ENCODE measurements at regions of chr5 and their contacts with region 1.

Region 1: DNA sequence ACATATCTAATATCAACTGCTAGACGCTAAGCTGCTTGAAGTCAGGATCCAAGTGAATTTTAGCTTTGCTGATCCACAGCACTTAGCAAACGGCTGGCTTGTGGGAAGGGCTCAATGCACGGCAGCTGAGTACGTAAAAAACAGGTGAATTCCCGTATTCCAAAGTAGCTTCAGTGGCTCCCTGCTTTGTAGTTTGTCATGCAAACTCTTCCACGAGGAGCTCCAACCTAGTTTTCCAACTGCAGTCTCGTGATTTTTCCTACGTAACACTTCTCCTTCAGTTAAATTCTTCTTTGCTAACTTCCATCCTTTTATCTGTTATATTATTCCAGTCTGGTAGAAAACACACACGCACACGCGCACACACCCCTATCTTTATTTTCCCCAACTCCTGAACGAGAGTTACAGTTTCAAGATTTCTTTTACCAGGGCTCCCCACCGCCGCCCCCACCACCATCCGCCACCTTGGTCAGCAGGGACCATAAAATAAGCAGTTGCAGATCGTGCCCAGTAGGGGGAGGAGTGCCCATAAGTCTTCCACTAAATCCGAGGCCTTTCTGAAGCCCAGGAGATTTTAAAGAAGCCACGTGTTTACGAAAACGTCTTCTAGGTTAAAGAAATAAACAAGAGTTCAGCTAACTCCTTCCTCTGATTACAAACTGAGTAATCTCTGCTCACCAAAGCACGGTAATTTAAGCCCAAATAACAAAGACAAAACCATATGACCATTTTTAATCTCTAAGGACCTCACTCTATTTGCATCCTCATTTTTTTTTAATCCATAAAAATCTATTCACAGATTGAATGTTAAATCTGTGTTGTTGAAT is 34.8 kb upstream of the TRIO start:
- DNase-seq: peak; percentile 70
- H3K4me3 ChIP-seq: no peak overlapping the region
- H3K27ac ChIP-seq: no peak overlapping the region
- H3K4me1 ChIP-seq: no peaks in the 10 kb centered on the region
- CTCF ChIP-seq: peak; percentile 82

Region 2: GRCh38 chr5:14270209-14270702 is 161.9 kb after region 1 on chr5:
- CTCF ChIA-PET with region 1: interaction called, 3 read pairs
- POLR2A ChIA-PET with region 1: interaction called, 3 read pairs
- intact Hi-C with region 1: loop called (anchors 1 kb)
- DNase-seq: peak; percentile 70
- H3K4me3 ChIP-seq: no peak overlapping the region
- H3K27ac ChIP-seq: no peak overlapping the region
- H3K4me1 ChIP-seq: peaks cover 17% of the 10 kb centered on the region
- CTCF ChIP-seq: peak; percentile 90

Region 3: GRCh38 chr5:14364576-14365472 is 256.4 kb after region 1 on chr5:
- CTCF ChIA-PET with region 1: no interaction called
- POLR2A ChIA-PET with region 1: no interaction called
- intact Hi-C with region 1: loop called (anchors 5 kb)
- DNase-seq: peak; percentile 60
- H3K4me3 ChIP-seq: no peak overlapping the region
- H3K27ac ChIP-seq: no peak overlapping the region
- H3K4me1 ChIP-seq: peaks cover 4% of the 10 kb centered on the region
- CTCF ChIP-seq: peak; percentile 86

Measured in OCI-LY7 (cell line).